Thyroid gland (tissue), 4 donors: ENCODE measurements at regions of chr20 and their contacts with region 1.

Region 1: GRCh38 chr20:17504898-17505635 is 26.1 kb downstream of the BFSP1 start:
- DNase-seq: peak; percentile 30 to 34
- H3K4me3 ChIP-seq: peak overlapping the region in 1 of 3 donors; percentile 18
- H3K27ac ChIP-seq: peak overlapping the region in 1 of 3 donors; percentile 1
- H3K4me1 ChIP-seq: peaks cover 5 to 10% of the 10 kb centered on the region in 2 donors
- H3K27me3 ChIP-seq: no peaks in the 10 kb centered on the region
- CTCF ChIP-seq: peak in 5 of 6 experiments; percentile 37 to 84 (median 65)
- POLR2A ChIP-seq: peak in 1 of 2 donors; percentile 8

Region 2: GRCh38 chr20:17898548-17898994 is 393.5 kb after region 1 on chr20:
- intact Hi-C with region 1: loop called (anchors 10 kb)
- DNase-seq: peak; percentile 79 to 80
- H3K4me3 ChIP-seq: no peak overlapping the region
- H3K27ac ChIP-seq: no peak overlapping the region
- H3K4me1 ChIP-seq: peaks cover 0 to 12% of the 10 kb centered on the region in 2 donors
- H3K27me3 ChIP-seq: no peaks in the 10 kb centered on the region
- CTCF ChIP-seq: peak; percentile 87 to 97 (median 94)
- POLR2A ChIP-seq: no peak

Region 3: GRCh38 chr20:17995967-17996819 is 491.1 kb after region 1 on chr20:
- intact Hi-C with region 1: loop called (anchors 10 kb)
- DNase-seq: peak; percentile 48 to 50
- H3K4me3 ChIP-seq: no peak overlapping the region
- H3K27ac ChIP-seq: peak overlapping the region in 1 of 3 donors; percentile 28
- H3K4me1 ChIP-seq: peaks cover 4 to 5% of the 10 kb centered on the region in 2 donors
- H3K27me3 ChIP-seq: no peaks in the 10 kb centered on the region
- CTCF ChIP-seq: peak; percentile 92 to 100 (median 98)
- POLR2A ChIP-seq: no peak